PC-9 (cell line): ENCODE measurements at regions of chr3 and their contacts with region 1.

Region 1: GRCh38 chr3:24288496-24289236 is 206.0 kb downstream of the THRB start:
- DNase-seq: no peak
- H3K4me3 ChIP-seq: no peak overlapping the region
- H3K27ac ChIP-seq: no peak overlapping the region
- H3K4me1 ChIP-seq: no peaks in the 10 kb centered on the region
- H3K27me3 ChIP-seq: no peaks in the 10 kb centered on the region
- CTCF ChIP-seq: no peak

Region 2: GRCh38 chr3:24215502-24215901 is 73.2 kb before region 1 on chr3:
- CTCF ChIA-PET with region 1: no interaction called
- POLR2A ChIA-PET with region 1: interaction called, 20 read pairs
- intact Hi-C with region 1: no loop called
- DNase-seq: no peak
- H3K4me3 ChIP-seq: no peak overlapping the region
- H3K27ac ChIP-seq: no peak overlapping the region
- H3K4me1 ChIP-seq: peaks cover 8% of the 10 kb centered on the region
- H3K27me3 ChIP-seq: no peaks in the 10 kb centered on the region
- CTCF ChIP-seq: no peak

Region 3: DNA sequence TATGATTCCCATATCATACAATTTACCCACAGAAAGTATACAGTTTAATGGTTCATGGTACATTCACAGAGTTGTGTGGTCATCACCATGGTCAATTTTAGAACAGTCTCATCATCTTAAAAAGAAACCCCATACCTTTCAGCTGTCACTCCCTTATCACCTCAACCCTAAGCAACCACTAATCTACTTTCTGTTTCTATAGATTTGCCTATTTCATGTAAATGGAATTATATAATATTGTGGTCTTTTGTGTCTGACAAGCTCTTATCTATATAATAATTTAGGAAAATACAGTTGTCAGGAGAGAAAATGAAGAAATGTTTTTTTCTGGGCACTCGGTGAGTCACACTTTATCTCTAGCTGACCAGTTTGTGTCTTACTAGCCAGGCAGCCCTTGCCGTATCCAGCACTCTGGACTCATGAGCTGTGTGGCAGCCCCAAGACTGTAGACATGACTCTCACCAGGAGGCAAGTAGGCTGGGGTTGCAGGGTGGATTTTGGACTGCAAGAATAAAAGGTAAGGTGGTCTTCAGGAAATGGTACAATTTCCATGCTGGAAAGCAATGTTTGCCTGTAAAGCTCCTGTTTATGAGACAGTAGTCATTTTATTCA is 28.7 kb before region 1 on chr3:
- CTCF ChIA-PET with region 1: no interaction called
- POLR2A ChIA-PET with region 1: no interaction called
- intact Hi-C with region 1: no loop called
- DNase-seq: no peak
- H3K4me3 ChIP-seq: no peak overlapping the region
- H3K27ac ChIP-seq: no peak overlapping the region
- H3K4me1 ChIP-seq: no peaks in the 10 kb centered on the region
- H3K27me3 ChIP-seq: no peaks in the 10 kb centered on the region
- CTCF ChIP-seq: no peak